ENCODE measurements at regions of chr6 and their contacts with region 1.

Region 1: GRCh38 chr6:36765594-36766398 is 68.2 kb downstream of the RAB44 start:
- DNase-seq: peak; percentile 82 to 88 (median 85)
- ATAC-seq: peak; percentile 62 to 78 (median 69)
- H3K4me3 ChIP-seq: no peak overlapping the region
- H3K27ac ChIP-seq: peak overlapping the region in 1 of 12 donors; percentile 26
- H3K4me1 ChIP-seq: peaks cover 0 to 49% (median 30%) of the 10 kb centered on the region in 12 donors
- H3K27me3 ChIP-seq: no peaks in the 10 kb centered on the region
- CTCF ChIP-seq: peak; percentile 78 to 94 (median 88)
- POLR2A ChIP-seq: no peak

Region 2: DNA sequence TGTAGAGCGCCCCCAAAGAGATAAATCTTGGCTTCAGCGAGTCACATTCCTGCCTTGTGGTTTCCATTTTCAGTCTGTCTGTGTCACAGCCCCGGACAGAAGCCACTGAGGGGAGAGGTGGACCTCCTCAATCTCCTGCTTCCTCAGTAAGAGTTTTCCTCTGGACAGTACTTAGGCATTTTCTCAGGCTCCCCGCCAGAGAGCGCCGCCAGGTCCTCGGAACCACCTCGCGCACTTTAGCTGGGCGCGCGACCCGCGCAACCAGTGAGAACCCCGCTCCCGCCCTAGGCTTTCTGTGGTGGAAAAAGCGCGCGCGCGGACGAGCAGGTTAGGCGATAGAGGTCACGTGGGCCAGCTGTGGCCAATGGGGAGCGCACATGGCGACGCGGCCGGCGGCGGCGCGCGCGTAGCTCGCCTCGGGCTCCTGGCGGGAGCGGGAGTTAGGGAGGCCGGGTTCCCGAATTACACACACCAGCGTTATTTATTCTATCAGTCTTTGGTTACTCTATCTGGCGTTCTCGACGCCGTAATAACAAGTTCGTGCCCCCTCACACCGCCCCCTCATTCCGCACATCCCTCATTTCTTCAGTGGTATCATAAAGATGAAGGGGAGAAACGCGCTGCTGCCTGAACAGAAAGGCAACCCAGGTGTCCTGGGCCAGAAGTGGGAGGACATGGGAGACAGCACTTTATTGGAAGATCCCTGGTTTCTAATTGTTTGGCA is 342.5 kb before region 1 on chr6:
- intact Hi-C with region 1: loop called in 2 of 10 experiments (anchors 10 kb)
- DNase-seq: peak; percentile 99
- ATAC-seq: peak; percentile 100
- H3K4me3 ChIP-seq: peak overlapping the region in 11 of 12 donors; percentile 35 to 67 (median 56)
- H3K27ac ChIP-seq: peak overlapping the region in 11 of 12 donors; percentile 55 to 87 (median 71)
- H3K4me1 ChIP-seq: peaks cover 0 to 13% (median 6%) of the 10 kb centered on the region in 12 donors
- H3K27me3 ChIP-seq: no peaks in the 10 kb centered on the region
- CTCF ChIP-seq: peak; percentile 45 to 87 (median 64)
- POLR2A ChIP-seq: peak in 1 of 2 donors; percentile 71

Region 3: GRCh38 chr6:36851149-36851614 is 85.4 kb after region 1 on chr6:
- intact Hi-C with region 1: loop called (anchors 1 to 2 kb)
- DNase-seq: peak in 3 of 5 donors; percentile 36 to 69 (median 68)
- ATAC-seq: peak in 2 of 4 donors; percentile 4 to 17
- H3K4me3 ChIP-seq: no peak overlapping the region
- H3K27ac ChIP-seq: peak overlapping the region in 8 of 12 donors; percentile 39 to 98 (median 79)
- H3K4me1 ChIP-seq: peaks cover 2 to 76% (median 50%) of the 10 kb centered on the region in 12 donors
- H3K27me3 ChIP-seq: no peaks in the 10 kb centered on the region
- CTCF ChIP-seq: peak; percentile 68 to 90 (median 83)
- POLR2A ChIP-seq: no peak

Region 4: DNA sequence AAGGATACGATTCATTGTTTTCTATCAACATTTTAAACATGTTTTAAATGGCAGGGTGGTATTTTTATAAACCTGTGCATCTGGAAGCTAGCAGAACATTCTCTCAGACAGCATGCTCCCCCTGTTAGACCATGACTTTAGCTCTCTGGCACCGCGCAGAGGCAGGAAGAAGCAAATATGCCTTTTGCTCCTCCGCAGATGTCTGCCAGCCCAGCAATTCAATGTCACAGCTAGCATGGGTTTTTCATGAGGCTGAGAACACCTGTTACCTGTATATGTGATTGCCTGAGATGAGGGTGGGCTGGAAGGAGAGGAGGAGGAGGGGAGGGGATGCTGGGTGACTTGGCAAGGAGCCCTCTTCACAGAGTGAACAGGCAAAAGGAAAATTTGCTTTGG is 213.5 kb after region 1 on chr6:
- intact Hi-C with region 1: loop called in 8 of 10 experiments (anchors 2 to 10 kb)
- DNase-seq: peak in 4 of 5 donors; percentile 64 to 78 (median 66)
- ATAC-seq: peak; percentile 54 to 72 (median 60)
- H3K4me3 ChIP-seq: no peak overlapping the region
- H3K27ac ChIP-seq: peak overlapping the region in 11 of 12 donors; percentile 22 to 77 (median 51)
- H3K4me1 ChIP-seq: peaks cover 12 to 96% (median 77%) of the 10 kb centered on the region in 12 donors
- H3K27me3 ChIP-seq: no peaks in the 10 kb centered on the region
- CTCF ChIP-seq: peak; percentile 19 to 74 (median 58)
- POLR2A ChIP-seq: no peak

Region 5: GRCh38 chr6:36985808-36986703 is 220.3 kb after region 1 on chr6 and contains the start of gene MTCH1:
- intact Hi-C with region 1: loop called in 5 of 10 experiments (anchors 10 kb)
- DNase-seq: peak; percentile 93 to 95 (median 94)
- ATAC-seq: peak; percentile 91 to 96 (median 94)
- H3K4me3 ChIP-seq: peak within 1 kb of the TSS; percentile 91 to 100 (median 98)
- H3K27ac ChIP-seq: peak within 1 kb of the TSS; percentile 89 to 100 (median 98)
- H3K4me1 ChIP-seq: peaks cover 8 to 51% (median 46%) of the 10 kb centered on the region in 12 donors
- H3K27me3 ChIP-seq: no peaks in the 10 kb centered on the region
- CTCF ChIP-seq: peak in 1 of 12 donors; percentile 16
- POLR2A ChIP-seq: peak; percentile 68 to 96
- total RNA-seq, gene MTCH1: 144 to 320 (median 193) TPM

Region 6: GRCh38 chr6:37207903-37208456 is 442.2 kb after region 1 on chr6:
- intact Hi-C with region 1: loop called in 5 of 10 experiments (anchors 2 to 10 kb)
- DNase-seq: peak; percentile 64 to 91 (median 80)
- ATAC-seq: peak in 3 of 4 donors; percentile 70 to 82 (median 70)
- H3K4me3 ChIP-seq: no peak overlapping the region
- H3K27ac ChIP-seq: peak overlapping the region in 1 of 12 donors; percentile 51
- H3K4me1 ChIP-seq: peaks cover 0 to 56% (median 0%) of the 10 kb centered on the region in 12 donors
- H3K27me3 ChIP-seq: no peaks in the 10 kb centered on the region
- CTCF ChIP-seq: peak; percentile 47 to 77 (median 60)
- POLR2A ChIP-seq: no peak

Measured in heart left ventricle (tissue), 16 donors.